GM12878 (cell line): ENCODE measurements at regions of chr12 and their contacts with region 1.

Region 1: GRCh38 chr12:101919447-101919846 is 42.1 kb downstream of the DRAM1 start:
- DNase-seq: no peak
- ATAC-seq: no peak
- H3K4me3 ChIP-seq: no peak overlapping the region
- H3K27ac ChIP-seq: no peak overlapping the region
- H3K4me1 ChIP-seq: peaks cover 26% of the 10 kb centered on the region
- H3K27me3 ChIP-seq: no peaks in the 10 kb centered on the region
- CTCF ChIP-seq: no peak
- EP300 ChIP-seq: no peak
- POLR2A ChIP-seq: no peak
- RAD21 ChIP-seq: no peak

Region 2: GRCh38 chr12:101793401-101793800 is 126.0 kb before region 1 on chr12:
- CTCF ChIA-PET with region 1: no interaction called
- POLR2A ChIA-PET with region 1: no interaction called
- RAD21 ChIA-PET with region 1: no interaction called
- SMC1A ChIA-PET with region 1: no interaction called
- in situ Hi-C with region 1: no loop called
- intact Hi-C with region 1: no loop called
- DNase-seq: peak; percentile 9
- ATAC-seq: peak; percentile 86
- H3K4me3 ChIP-seq: no peak overlapping the region
- H3K27ac ChIP-seq: no peak overlapping the region
- H3K4me1 ChIP-seq: peaks cover 10% of the 10 kb centered on the region
- H3K27me3 ChIP-seq: no peaks in the 10 kb centered on the region
- CTCF ChIP-seq: no peak
- EP300 ChIP-seq: no peak
- POLR2A ChIP-seq: no peak
- RAD21 ChIP-seq: no peak

Region 3: GRCh38 chr12:102010265-102010994 is 91.0 kb after region 1 on chr12:
- CTCF ChIA-PET with region 1: interaction called, 3 read pairs
- POLR2A ChIA-PET with region 1: no interaction called
- RAD21 ChIA-PET with region 1: no interaction called
- SMC1A ChIA-PET with region 1: no interaction called
- in situ Hi-C with region 1: no loop called
- intact Hi-C with region 1: loop called (anchors 2 kb)
- DNase-seq: peak; percentile 84
- ATAC-seq: peak; percentile 98
- H3K4me3 ChIP-seq: peak overlapping the region; percentile 42; the same call in 1 of the 2 replicates
- H3K27ac ChIP-seq: peak overlapping the region; percentile 93
- H3K4me1 ChIP-seq: peaks cover 21% of the 10 kb centered on the region
- H3K27me3 ChIP-seq: no peaks in the 10 kb centered on the region
- CTCF ChIP-seq: no peak
- EP300 ChIP-seq: no peak
- POLR2A ChIP-seq: peak; percentile 63
- RAD21 ChIP-seq: no peak

Region 4: DNA sequence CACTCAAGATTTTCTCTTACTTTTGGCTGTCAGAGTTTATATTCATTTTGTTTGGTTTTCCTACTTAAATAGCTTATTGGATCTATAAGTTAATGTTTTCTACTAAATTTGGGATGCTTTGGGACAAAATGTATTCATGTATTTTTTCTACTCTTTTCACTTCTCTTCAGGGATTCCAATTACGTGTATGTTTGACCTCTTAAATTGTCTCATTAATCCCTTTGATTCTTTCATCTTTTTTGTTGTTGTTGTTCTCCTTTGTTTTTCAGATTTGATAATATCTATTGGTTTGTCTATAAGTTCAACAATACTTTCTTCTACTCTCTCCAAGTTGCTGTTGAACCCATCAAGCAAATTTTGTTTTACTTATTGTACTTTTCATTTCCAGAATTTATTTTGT is 243.9 kb after region 1 on chr12:
- CTCF ChIA-PET with region 1: interaction called, 6 read pairs
- POLR2A ChIA-PET with region 1: no interaction called
- RAD21 ChIA-PET with region 1: interaction called, 3 read pairs
- SMC1A ChIA-PET with region 1: no interaction called
- in situ Hi-C with region 1: no loop called
- intact Hi-C with region 1: loop called (anchors 5 kb)
- DNase-seq: no peak
- ATAC-seq: no peak
- H3K4me3 ChIP-seq: no peak overlapping the region
- H3K27ac ChIP-seq: no peak overlapping the region
- H3K4me1 ChIP-seq: peaks cover 5% of the 10 kb centered on the region
- H3K27me3 ChIP-seq: no peaks in the 10 kb centered on the region
- CTCF ChIP-seq: no peak
- EP300 ChIP-seq: no peak
- POLR2A ChIP-seq: no peak
- RAD21 ChIP-seq: no peak

Region 5: DNA sequence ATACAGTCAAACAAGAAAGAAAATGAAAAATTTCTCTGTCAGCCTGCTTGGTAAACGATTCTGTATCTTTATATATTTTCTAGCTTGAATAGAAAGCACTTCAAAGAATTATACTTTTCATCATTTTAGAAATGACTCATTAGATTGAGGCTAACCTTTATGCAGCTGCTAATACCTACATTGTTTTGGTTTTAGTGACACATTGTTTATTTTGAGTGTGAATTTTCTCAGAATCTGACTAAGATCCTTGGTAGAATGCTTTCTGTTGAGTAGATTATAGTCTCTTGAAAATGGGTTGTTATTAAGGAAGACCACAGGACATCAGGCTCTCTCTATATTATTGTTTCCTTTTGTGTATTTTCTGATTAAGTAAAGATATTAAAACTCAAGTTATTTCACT is 278.3 kb after region 1 on chr12 and contains the start of gene PMCH:
- CTCF ChIA-PET with region 1: no interaction called
- POLR2A ChIA-PET with region 1: no interaction called
- RAD21 ChIA-PET with region 1: no interaction called
- SMC1A ChIA-PET with region 1: no interaction called
- in situ Hi-C with region 1: no loop called
- intact Hi-C with region 1: no loop called
- DNase-seq: peak; percentile 24
- ATAC-seq: peak; percentile 89
- H3K4me3 ChIP-seq: no peak within 1 kb of the TSS
- H3K27ac ChIP-seq: peak within 1 kb of the TSS; percentile 27; the same call in 1 of the 2 replicates
- H3K4me1 ChIP-seq: no peaks in the 10 kb centered on the region
- H3K27me3 ChIP-seq: no peaks in the 10 kb centered on the region
- CTCF ChIP-seq: no peak
- EP300 ChIP-seq: peak in 1 of 2 experiments; percentile 45; a peak in 1 of 4 replicates
- POLR2A ChIP-seq: no peak
- RAD21 ChIP-seq: no peak
- polyA plus RNA-seq, gene PMCH: 0.64 to 1.1 TPM